ENCODE measurements at regions of chr20 and their contacts with region 1.

Region 1: GRCh38 chr20:24934101-24934661 is 14.9 kb upstream of the CST7 start:
- DNase-seq: no peak
- H3K4me3 Mint-ChIP-seq: no peak overlapping the region
- H3K27ac Mint-ChIP-seq: no peak overlapping the region
- H3K4me1 Mint-ChIP-seq: peaks cover 28% of the 10 kb centered on the region
- H3K27me3 Mint-ChIP-seq: no peaks in the 10 kb centered on the region

Region 2: GRCh38 chr20:24185791-24186190 is 748.4 kb before region 1 on chr20:
- CTCF ChIA-PET with region 1: no interaction called
- POLR2A ChIA-PET with region 1: no interaction called
- intact Hi-C with region 1: no loop called
- DNase-seq: no peak
- H3K4me3 Mint-ChIP-seq: no peak overlapping the region
- H3K27ac Mint-ChIP-seq: no peak overlapping the region
- H3K4me1 Mint-ChIP-seq: no peaks in the 10 kb centered on the region
- H3K27me3 Mint-ChIP-seq: peaks cover 3% of the 10 kb centered on the region

Region 3: GRCh38 chr20:24948939-24949679 is 14.9 kb after region 1 on chr20 and contains the start of gene CST7:
- CTCF ChIA-PET with region 1: interaction called, 10 read pairs
- POLR2A ChIA-PET with region 1: no interaction called
- intact Hi-C with region 1: loop called (anchors 2 kb)
- DNase-seq: peak; percentile 93
- H3K4me3 Mint-ChIP-seq: peak within 1 kb of the TSS; percentile 83
- H3K27ac Mint-ChIP-seq: peak within 1 kb of the TSS; percentile 96
- H3K4me1 Mint-ChIP-seq: peaks cover 50% of the 10 kb centered on the region
- H3K27me3 Mint-ChIP-seq: no peaks in the 10 kb centered on the region
- total RNA-seq, gene CST7: 81.8 to 83.1 TPM

Region 4: DNA sequence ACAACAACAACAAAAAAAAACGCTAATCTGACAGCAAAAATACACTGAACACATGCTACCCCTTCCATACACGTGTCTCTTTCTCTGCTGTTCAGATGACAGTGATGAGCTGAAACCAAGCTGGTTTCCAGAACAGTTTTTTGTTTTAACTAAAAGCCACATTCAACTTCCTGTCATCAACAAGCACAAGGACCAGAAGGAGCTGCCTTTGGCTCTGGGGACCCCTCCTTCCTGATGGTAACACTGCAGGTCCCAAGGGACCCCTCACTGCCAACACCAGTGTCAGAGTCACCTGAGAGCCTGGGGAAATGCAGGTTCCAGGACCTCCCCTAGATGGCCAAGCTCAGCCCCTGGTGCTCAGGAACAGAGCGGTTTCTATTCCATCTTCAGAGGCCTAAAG is 20.9 kb after region 1 on chr20:
- CTCF ChIA-PET with region 1: interaction called, 10 read pairs
- POLR2A ChIA-PET with region 1: no interaction called
- intact Hi-C with region 1: no loop called
- DNase-seq: peak; percentile 27
- H3K4me3 Mint-ChIP-seq: no peak overlapping the region
- H3K27ac Mint-ChIP-seq: peak overlapping the region; percentile 74
- H3K4me1 Mint-ChIP-seq: peaks cover 36% of the 10 kb centered on the region
- H3K27me3 Mint-ChIP-seq: no peaks in the 10 kb centered on the region

Region 5: DNA sequence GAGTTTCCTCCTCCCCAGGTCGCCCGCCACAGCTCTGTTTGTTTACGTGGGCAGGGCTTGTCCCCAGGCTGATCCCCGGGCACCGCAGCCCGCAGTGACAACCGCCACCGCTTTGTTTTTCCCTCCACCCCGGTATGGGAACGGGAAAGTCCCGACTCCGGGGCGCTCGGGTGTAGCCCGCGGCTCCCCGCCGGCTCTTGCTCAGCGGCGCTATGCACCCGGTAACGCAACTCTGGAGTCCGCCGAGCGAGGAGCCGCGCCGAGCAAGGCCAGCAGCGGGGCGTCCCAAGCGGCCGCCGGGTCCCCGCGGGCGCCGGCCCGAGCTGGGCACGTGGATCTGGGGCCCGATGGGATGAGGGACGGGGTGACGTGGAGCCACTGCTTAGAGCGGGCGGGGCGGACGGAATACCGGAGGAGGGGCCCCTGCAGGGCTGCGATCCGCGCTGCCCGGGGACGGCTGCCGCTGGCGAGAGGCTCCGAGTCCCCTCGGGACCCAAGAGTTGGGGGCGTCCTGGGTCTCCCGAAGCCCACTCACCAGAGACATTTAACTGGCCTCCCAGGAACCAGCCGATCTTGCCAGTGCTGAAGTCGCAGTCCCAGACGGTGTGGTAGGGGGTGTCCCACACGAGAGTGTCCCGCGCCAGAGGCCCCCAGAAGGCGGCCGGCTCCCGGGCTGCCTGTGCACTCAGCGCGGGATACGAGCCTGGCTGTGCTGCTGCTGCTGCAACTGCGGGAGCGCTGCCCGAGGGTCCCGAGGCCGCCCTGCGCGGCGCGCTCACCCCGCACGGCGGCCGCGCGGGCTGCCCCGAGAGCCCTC is 123.3 kb after region 1 on chr20:
- CTCF ChIA-PET with region 1: no interaction called
- POLR2A ChIA-PET with region 1: no interaction called
- intact Hi-C with region 1: no loop called
- DNase-seq: peak; percentile 87
- H3K4me3 Mint-ChIP-seq: peak overlapping the region; percentile 79
- H3K27ac Mint-ChIP-seq: peak overlapping the region; percentile 79
- H3K4me1 Mint-ChIP-seq: peaks cover 47% of the 10 kb centered on the region
- H3K27me3 Mint-ChIP-seq: no peaks in the 10 kb centered on the region

Region 6: DNA sequence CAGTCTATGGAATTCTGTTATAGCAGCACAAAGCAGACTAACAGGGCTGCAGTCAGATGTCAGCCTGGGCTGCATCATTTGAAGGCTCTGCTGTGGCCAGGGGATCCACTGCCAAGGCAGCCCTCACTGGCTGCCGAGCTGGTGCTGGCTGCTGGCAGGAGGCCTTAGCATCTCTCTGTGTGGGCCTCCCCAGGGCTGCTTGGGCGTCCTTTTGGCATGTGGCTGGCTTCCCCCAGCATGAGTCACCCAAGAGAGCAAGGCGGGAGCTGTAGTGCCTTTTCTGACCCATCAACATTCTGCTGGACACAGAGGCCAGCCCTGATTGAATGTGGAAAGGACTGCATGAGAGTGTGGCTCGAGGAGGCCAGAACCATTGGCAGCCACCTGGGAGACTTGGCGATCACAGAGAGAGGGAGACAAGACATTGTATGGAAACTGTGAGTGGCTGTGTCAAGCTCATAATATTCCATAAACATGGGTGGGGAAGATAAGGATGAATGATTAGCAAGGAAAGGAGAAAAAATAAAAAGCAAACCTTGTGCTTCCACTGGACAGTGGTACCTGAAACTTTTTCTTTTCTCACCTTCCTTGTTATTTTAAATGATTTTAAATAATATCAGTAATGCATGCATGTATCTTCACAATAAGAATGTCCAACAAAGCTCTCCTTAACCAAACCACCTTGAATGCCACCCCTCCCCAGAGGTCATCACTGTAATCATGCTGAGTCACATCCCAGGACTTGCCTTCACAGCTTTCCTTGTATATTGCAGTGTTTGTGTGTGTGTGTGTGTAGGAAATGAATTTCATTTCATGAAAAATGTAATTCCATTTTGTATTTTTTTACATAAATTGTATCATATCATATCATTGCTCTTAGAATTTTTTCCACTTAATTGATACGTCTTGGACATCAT is 202.7 kb after region 1 on chr20:
- CTCF ChIA-PET with region 1: no interaction called
- POLR2A ChIA-PET with region 1: no interaction called
- intact Hi-C with region 1: no loop called
- DNase-seq: no peak
- H3K4me3 Mint-ChIP-seq: no peak overlapping the region
- H3K27ac Mint-ChIP-seq: no peak overlapping the region
- H3K4me1 Mint-ChIP-seq: no peaks in the 10 kb centered on the region
- H3K27me3 Mint-ChIP-seq: peaks cover 5% of the 10 kb centered on the region

Measured in activated CD4-positive, alpha-beta memory T cell treated with anti-CD3 and anti-CD28 coated beads for 36 hours (primary cell).